Activated T-helper 2 cell treated with anti-CD3 and anti-CD28 coated beads, Interferon-gamma antibody, Interleukin-2, Interleukin-4, amounts not matched to agents 10 μg/mL and 5 μg/mL and 100 μg/mL, durations not matched to agents 14 hours and 24 hours and 36 hours (primary cell): ENCODE measurements at regions of chr10 and their contacts with region 1.

Region 1: GRCh38 chr10:17029581-17030271 is 99.9 kb downstream of the CUBN start:
- DNase-seq: peak; percentile 66
- H3K4me3 Mint-ChIP-seq: peak overlapping the region; percentile 59
- H3K27ac Mint-ChIP-seq: peak overlapping the region; percentile 86
- H3K4me1 Mint-ChIP-seq: peaks cover 74% of the 10 kb centered on the region
- H3K27me3 Mint-ChIP-seq: peaks cover 17% of the 10 kb centered on the region

Region 2: GRCh38 chr10:16843252-16843870 is 186.4 kb before region 1 on chr10:
- intact Hi-C with region 1: loop called (anchors 5 kb)
- DNase-seq: no peak
- H3K4me3 Mint-ChIP-seq: no peak overlapping the region
- H3K27ac Mint-ChIP-seq: no peak overlapping the region
- H3K4me1 Mint-ChIP-seq: peaks cover 2% of the 10 kb centered on the region
- H3K27me3 Mint-ChIP-seq: peaks cover 17% of the 10 kb centered on the region

Region 3: DNA sequence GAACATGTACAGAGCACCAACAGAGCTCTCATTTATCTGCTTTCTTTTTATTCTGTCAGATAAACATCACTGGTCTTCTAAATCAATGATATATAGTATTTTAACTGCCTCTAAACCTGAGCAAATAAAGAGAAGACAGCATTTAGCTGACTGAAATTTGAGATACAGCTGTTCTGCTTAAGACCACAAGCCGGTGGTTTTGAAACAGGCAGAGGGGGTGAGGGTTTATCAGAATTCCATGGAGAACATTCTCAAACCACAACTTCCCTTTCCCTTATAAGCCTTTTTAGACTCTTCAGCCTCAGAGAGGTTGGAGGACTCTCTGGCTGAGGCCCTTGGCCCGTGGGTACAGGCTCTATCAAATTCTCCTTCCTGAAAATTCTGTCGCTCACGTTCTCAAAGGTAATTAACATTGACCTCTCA is 125.1 kb before region 1 on chr10:
- intact Hi-C with region 1: loop called (anchors 5 kb)
- DNase-seq: no peak
- H3K4me3 Mint-ChIP-seq: no peak overlapping the region
- H3K27ac Mint-ChIP-seq: no peak overlapping the region
- H3K4me1 Mint-ChIP-seq: peaks cover 7% of the 10 kb centered on the region
- H3K27me3 Mint-ChIP-seq: peaks cover 6% of the 10 kb centered on the region

Region 4: GRCh38 chr10:16965740-16966447 is 63.8 kb before region 1 on chr10:
- intact Hi-C with region 1: loop called (anchors 1 kb)
- DNase-seq: no peak
- H3K4me3 Mint-ChIP-seq: no peak overlapping the region
- H3K27ac Mint-ChIP-seq: no peak overlapping the region
- H3K4me1 Mint-ChIP-seq: peaks cover 12% of the 10 kb centered on the region
- H3K27me3 Mint-ChIP-seq: peaks cover 28% of the 10 kb centered on the region

Region 5: DNA sequence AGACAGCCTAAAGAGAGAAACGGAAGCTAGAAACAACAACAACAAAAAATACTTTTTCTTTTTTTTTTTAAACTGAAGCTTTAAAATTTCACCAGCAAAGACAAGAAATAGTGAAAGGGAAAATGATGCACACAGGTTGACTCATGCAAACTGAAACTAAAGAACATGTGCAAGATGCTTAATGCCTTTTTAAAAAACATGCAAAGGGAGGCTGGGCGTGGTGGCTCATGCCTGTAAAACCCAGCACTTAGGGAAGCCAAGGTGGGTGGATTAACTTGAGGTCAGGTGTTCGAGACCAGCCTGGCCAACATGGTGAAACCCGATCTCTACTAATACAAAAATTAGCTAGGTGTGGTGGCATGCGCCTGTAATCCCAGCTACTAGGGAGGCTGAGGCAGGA is 115.0 kb after region 1 on chr10:
- intact Hi-C with region 1: loop called (anchors 2 kb)
- DNase-seq: peak; percentile 50
- H3K4me3 Mint-ChIP-seq: no peak overlapping the region
- H3K27ac Mint-ChIP-seq: peak overlapping the region; percentile 50
- H3K4me1 Mint-ChIP-seq: peaks cover 37% of the 10 kb centered on the region
- H3K27me3 Mint-ChIP-seq: peaks cover 1% of the 10 kb centered on the region

Region 6: GRCh38 chr10:17216217-17216900 is 186.6 kb after region 1 on chr10:
- intact Hi-C with region 1: loop called (anchors 1 kb)
- DNase-seq: peak; percentile 43
- H3K4me3 Mint-ChIP-seq: no peak overlapping the region
- H3K27ac Mint-ChIP-seq: peak overlapping the region; percentile 94
- H3K4me1 Mint-ChIP-seq: peaks cover 43% of the 10 kb centered on the region
- H3K27me3 Mint-ChIP-seq: no peaks in the 10 kb centered on the region

Region 7: DNA sequence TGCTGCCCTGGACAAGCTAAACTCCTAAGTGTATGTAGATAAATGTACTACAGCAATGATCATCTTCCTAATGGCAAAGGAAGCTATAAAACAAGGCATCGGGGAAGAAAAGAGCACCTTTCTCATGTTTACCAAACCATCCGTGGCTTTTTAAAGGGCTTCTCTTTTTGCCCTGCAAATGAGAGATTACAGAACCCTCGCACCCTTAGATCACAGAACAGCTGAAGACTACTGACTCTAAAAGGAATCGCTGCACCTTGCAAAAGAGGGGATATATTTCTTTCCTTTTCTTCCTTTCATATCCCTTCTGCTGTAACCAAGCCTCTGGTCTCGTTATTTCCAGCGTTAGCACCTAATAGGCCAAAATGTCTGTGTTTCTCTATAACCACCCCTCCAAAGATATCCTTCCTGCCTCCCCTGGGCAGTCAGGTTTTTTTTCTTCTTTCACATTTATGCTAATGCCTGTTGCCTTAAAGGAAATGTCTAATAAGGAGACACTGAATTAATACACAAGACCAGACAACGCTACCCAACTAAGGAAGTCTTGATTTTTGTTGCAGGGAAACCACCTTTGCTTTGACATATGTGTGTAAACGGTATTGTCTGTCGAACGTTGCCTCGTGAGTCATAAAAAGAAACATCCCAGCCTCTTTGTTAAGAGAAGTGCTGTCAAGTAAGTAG is 414.1 kb after region 1 on chr10:
- intact Hi-C with region 1: loop called (anchors 5 kb)
- DNase-seq: no peak
- H3K4me3 Mint-ChIP-seq: peak overlapping the region; percentile 13
- H3K27ac Mint-ChIP-seq: no peak overlapping the region
- H3K4me1 Mint-ChIP-seq: peaks cover 24% of the 10 kb centered on the region
- H3K27me3 Mint-ChIP-seq: peaks cover 13% of the 10 kb centered on the region